ENCODE measurements at regions of chr1 and their contacts with region 1.

Region 1: GRCh38 chr1:153566440-153567379 is 1.1 kb upstream of the S100A2 start:
- DNase-seq: peak; percentile 80
- H3K4me3 Mint-ChIP-seq: peak overlapping the region; percentile 25
- H3K27ac Mint-ChIP-seq: peak overlapping the region; percentile 99
- H3K4me1 Mint-ChIP-seq: peaks cover 41% of the 10 kb centered on the region
- H3K27me3 Mint-ChIP-seq: no peaks in the 10 kb centered on the region

Region 2: DNA sequence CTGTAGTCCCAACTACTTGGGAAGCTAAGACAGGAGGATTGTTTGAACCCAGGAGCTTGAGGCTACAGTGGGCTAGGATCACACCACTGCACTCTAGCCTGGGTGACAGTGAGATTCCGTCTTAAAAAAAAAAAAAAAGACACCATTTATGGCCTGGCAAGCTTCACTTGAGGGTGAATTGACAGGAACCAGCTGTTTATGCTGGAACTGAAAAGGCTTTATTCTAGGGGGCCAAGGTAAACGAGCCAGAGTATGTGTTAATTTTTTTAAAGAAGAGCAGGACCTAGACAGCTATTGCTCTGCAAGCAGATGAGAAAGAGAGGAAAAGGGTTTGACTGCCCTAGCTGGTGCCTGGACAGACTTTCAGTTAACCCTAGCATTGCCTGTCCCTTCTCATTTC is 68.0 kb before region 1 on chr1:
- CTCF ChIA-PET with region 1: no interaction called
- POLR2A ChIA-PET with region 1: no interaction called
- DNase-seq: no peak
- H3K4me3 Mint-ChIP-seq: no peak overlapping the region
- H3K27ac Mint-ChIP-seq: no peak overlapping the region
- H3K4me1 Mint-ChIP-seq: no peaks in the 10 kb centered on the region
- H3K27me3 Mint-ChIP-seq: peaks cover 29% of the 10 kb centered on the region

Region 3: GRCh38 chr1:153510984-153511410 is 55.7 kb before region 1 on chr1:
- CTCF ChIA-PET with region 1: interaction called, 23 read pairs
- POLR2A ChIA-PET with region 1: no interaction called
- DNase-seq: peak; percentile 84
- H3K4me3 Mint-ChIP-seq: no peak overlapping the region
- H3K27ac Mint-ChIP-seq: peak overlapping the region; percentile 38
- H3K4me1 Mint-ChIP-seq: peaks cover 36% of the 10 kb centered on the region
- H3K27me3 Mint-ChIP-seq: no peaks in the 10 kb centered on the region

Region 4: DNA sequence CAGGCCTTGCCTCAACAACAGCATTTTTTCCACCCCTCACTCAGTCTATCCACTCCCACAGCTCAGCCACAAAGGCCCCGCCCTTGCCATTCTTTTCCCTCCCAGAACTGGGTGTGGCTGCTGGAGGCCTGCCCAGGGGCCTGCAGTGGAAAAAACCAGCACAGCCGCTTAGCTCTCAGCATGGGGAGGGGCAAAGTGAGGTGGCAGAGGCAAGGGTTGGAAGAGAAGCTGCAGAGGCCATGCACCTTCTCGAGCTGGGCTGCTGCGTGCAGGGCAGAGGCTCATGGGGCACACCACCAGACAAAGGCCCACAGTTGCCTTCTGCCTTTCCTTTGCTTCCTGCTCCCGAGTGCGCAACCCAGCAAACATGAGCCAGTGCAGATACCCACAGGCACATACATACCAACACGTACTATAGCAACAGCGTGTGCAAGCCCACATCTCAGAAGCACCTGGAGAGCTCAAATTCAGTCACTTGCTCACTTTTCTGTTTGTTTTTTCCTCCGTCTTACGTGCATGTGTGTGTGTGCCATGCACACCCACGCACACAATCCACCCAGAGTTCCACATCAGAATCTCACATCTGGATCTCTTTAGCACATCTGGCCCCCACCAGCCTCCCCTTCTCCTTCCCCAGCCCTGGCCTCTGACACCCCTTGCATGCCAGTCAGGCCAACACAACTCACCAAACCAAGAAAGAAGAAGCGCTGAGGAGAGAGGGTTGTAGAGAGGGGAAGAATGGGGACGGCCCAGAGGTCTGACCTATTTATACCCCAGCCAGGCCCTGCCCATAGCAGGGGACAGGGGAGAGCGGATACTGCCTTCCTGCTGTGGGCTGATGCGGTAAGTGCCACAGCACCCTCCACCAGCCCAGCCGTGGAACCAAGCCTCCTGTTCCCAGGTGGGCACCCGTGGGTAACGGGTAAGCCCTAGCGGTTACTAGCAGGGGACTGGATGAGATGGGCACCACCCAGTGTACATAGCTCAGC is 21.3 kb before region 1 on chr1 and contains the start of gene S100A4:
- CTCF ChIA-PET with region 1: interaction called, 24 read pairs
- POLR2A ChIA-PET with region 1: interaction called, 7 read pairs
- DNase-seq: peak; percentile 97
- H3K4me3 Mint-ChIP-seq: peak within 1 kb of the TSS; percentile 91
- H3K27ac Mint-ChIP-seq: peak within 1 kb of the TSS; percentile 98
- H3K4me1 Mint-ChIP-seq: peaks cover 85% of the 10 kb centered on the region
- H3K27me3 Mint-ChIP-seq: no peaks in the 10 kb centered on the region
- total RNA-seq, gene S100A4: 678 to 905 TPM

Region 5: DNA sequence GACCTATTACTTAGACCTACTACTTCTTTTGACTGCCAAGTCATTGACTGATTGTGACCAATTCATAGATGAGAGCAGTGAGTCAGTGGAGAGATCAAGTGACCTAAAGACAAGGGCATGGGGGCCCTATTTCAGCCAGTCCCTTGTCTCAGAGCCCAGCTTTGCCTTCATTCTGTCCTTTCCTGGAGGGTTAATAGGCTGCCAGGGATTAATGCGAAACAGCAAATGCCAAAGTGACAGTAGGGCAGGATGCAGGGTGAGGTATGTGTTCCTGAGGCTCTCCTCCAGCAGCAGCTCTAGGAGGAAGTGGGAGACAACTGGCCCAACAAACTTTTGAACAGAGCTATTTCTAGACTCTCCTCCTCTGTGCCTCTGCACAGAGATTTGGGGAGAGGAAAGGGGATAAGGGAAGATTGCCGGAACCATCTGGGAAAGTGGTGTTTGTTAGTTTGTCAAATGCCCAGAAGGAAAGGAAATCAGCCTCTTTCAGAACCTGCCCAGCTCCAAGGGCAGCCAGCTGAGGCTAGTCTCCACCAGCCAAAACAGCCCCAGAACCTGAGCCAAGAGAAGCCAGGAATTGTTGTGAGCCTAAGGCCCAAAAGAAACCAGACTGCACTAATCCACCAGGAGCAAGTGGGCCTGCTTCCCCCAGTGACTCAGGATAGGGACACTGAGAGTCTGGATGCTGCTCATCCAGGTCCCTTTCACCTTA is 12.7 kb before region 1 on chr1:
- CTCF ChIA-PET with region 1: interaction called, 24 read pairs
- POLR2A ChIA-PET with region 1: no interaction called
- DNase-seq: no peak
- H3K4me3 Mint-ChIP-seq: no peak overlapping the region
- H3K27ac Mint-ChIP-seq: no peak overlapping the region
- H3K4me1 Mint-ChIP-seq: peaks cover 9% of the 10 kb centered on the region
- H3K27me3 Mint-ChIP-seq: no peaks in the 10 kb centered on the region

Measured in activated CD4-positive, alpha-beta T cell treated with anti-CD3 and anti-CD28 coated beads, Interleukin-2, amount 10 ng/mL, durations not matched to agents 7 days and 5 days (primary cell).